Keratinocyte (primary cell): ENCODE measurements at regions of chr13 and their contacts with region 1.

Region 1: DNA sequence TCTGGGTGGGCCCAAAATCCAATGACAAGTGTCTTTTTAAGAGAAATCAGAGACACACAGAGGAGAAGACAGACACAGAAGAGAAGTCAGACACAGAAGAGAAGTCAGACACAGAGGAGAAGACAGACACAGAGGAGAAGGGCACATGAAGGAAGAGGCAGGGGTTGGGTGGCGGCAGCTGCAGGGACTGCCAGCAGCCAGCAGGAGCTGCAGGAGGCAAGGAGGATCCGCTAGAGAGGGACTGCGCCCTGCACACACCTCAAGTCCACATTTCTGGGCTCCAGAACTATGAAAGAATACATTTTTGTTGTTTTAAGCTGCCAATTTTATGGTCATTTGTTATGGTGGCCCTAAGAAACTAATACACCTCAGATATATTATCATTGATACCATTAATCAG is 140.6 kb downstream of the ZIC5 start:
- DNase-seq: no peak
- H3K4me3 ChIP-seq: no peak overlapping the region
- H3K27ac ChIP-seq: no peak overlapping the region
- H3K4me1 ChIP-seq: no peaks in the 10 kb centered on the region
- H3K27me3 ChIP-seq: no peaks in the 10 kb centered on the region
- CTCF ChIP-seq: no peak

Region 2: DNA sequence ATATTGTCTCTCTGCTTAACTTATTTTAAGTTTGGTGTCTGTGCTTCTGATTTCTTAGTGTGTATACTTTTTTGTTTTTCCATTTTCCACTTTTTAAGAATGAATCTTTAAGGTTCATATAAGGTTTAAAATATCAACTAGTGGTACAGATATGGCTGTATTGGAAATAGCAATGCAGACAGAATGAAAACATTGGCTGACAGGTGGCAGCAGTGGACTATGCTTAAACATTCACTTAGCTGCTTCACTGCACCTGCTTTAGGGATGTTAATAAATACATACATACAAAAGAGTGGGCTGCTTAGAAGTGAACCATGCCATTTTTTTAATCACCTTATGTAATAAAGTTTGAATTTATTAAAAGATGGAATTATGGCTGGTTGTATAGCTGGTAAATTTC is 302.4 kb before region 1 on chr13:
- dilution Hi-C with region 1: no loop called
- DNase-seq: no peak
- H3K4me3 ChIP-seq: no peak overlapping the region
- H3K27ac ChIP-seq: no peak overlapping the region
- H3K4me1 ChIP-seq: no peaks in the 10 kb centered on the region
- H3K27me3 ChIP-seq: no peaks in the 10 kb centered on the region
- CTCF ChIP-seq: no peak

Region 3: GRCh38 chr13:99686157-99686572 is 144.8 kb before region 1 on chr13:
- dilution Hi-C with region 1: loop called (anchors 25 kb)
- DNase-seq: no peak
- H3K4me3 ChIP-seq: no peak overlapping the region
- H3K27ac ChIP-seq: no peak overlapping the region
- H3K4me1 ChIP-seq: no peaks in the 10 kb centered on the region
- H3K27me3 ChIP-seq: no peaks in the 10 kb centered on the region
- CTCF ChIP-seq: no peak

Region 4: DNA sequence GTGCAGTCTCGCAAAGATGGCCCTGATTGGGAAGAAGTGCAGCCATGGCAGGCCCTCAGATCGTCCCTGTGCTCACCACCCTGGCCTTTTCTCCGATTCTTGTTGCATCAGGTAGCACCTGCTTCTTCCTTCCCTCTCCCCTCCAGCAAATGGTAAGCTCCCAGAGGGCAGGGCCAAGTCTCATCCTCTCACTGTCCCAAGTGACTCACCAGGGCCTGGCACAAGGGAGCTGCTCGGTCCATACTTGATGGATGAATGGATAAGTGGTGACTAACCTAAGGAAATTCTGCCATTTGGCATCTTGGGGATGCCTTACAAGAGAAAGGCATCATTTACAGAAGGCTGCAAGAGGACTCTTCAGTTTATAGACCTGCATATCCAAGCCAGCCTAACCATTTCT is 55.8 kb after region 1 on chr13:
- dilution Hi-C with region 1: no loop called
- DNase-seq: no peak
- H3K4me3 ChIP-seq: no peak overlapping the region
- H3K27ac ChIP-seq: no peak overlapping the region
- H3K4me1 ChIP-seq: no peaks in the 10 kb centered on the region
- H3K27me3 ChIP-seq: no peaks in the 10 kb centered on the region
- CTCF ChIP-seq: no peak